AG04449 (cell line): ENCODE measurements at regions of chr6 and their contacts with region 1.

Region 1: DNA sequence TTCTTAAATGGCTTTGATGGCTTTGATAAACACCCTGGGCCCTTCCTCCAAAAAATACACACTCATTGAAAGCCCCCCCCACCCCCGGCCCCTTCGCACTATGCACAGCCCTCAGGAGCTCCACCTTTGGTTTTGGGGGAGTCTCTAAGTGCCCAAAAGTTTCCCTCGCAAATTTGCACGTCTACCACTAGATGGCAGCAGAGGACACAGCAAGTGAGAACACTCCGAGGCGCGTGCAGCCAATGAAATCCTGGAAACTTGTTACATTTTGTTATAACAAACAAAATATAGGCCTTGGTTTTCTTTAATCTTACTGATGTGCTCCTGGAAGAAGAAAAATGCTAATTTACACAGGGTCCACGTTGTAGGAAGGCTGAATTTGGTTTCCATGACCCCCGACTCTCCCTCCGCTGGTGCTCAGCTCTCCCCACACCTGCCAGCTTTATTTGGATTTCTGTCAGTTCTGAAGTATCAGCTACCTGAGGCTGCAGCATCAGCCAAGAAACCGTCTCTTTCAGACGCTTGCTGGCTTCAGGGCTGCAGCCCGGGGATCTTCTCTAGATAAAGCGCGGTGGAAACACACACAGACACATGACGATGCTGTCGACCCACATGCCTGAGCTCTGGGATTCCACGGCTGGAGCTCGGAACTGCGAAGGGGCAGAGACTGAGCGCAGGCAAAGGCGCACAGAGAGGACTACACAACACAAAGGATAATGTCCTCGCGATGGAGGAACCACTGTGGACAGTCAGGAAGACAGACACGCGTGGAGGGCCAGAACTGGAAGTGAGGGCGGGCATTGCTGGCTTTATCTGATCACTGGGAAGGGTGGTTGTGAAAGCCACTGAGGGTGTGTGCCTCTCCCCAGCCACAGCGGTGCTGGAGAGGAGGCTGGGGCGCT is 148.4 kb upstream of the RPS6KA2 start:
- DNase-seq: peak; percentile 9
- H3K4me3 ChIP-seq: no peak overlapping the region
- CTCF ChIP-seq: peak; percentile 81

Region 2: GRCh38 chr6:166739117-166739975 is 36.1 kb before region 1 on chr6:
- CTCF ChIA-PET with region 1: interaction called, 14 read pairs
- POLR2A ChIA-PET with region 1: no interaction called
- DNase-seq: no peak
- H3K4me3 ChIP-seq: no peak overlapping the region
- CTCF ChIP-seq: no peak

Region 3: DNA sequence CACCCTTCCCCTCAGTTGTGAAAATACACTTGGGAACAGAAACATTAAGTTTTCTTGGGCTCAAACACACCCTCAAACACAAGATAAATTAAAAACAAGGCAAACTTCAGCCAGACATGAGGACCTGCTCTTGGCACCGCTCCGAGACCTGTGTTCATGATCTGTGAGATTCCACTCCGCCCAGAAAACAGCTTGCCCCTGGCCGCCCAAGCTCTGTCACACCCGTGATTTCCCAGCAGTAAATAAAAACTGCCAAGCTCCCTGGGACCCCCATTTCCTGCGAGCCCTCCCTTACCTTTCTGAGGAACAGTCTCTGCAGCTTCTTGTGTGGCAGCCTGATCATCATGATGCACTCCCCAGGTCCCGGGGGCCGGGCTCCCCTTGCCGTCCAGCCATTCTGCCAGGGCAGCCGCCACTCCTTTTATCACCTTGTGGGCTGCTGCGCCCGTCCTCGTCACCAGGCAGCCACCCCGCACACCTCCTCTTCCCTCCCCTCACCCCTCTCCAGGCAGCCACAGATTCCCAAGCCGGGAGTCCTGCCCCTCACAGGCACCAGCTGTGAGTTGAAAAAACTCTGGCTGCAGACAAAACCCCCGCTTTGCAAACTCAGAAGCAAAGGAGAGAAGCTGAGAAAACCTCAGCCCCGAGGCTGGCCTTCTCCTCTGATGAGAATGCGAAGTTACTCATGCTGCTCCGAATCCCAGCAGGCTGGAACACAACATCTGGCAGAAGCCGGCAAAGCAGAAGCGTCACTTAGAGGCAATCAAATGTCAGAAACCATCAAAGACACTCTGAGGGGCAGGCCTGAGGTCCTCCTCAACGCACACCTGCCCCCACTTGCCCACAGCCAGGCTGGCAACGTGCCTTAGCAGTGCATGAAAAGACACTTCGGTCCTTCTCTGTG is 17.9 kb before region 1 on chr6:
- CTCF ChIA-PET with region 1: interaction called, 23 read pairs
- POLR2A ChIA-PET with region 1: no interaction called
- DNase-seq: no peak
- H3K4me3 ChIP-seq: no peak overlapping the region; the same call in 1 of the 2 replicates
- CTCF ChIP-seq: no peak

Region 4: DNA sequence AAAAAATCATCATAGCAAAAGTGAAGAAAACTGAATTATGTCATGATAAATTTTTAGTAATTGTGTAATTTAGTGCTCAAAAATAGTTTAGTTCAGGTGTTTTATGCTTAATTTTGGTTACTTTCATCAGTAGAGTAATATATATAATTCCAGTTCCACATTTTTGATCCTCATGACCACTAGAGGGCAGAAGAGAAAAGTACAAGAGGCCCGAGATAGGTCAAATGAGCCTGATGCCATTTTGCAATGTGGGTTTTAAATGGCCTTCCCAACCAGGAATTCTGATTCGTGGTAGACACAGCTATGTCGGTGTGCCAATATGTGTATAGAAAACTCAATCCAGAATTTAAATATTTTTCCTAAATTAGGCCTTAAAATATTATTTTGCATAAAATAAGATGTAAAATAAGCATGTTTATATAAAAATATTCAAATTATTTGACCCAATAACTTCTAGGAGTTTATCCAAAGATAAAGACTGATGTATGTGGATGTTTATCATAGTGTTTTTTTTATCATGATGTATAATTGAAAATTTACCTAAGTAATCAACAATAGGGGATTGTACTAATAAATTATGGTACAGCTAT is 11.4 kb after region 1 on chr6:
- CTCF ChIA-PET with region 1: interaction called, 30 read pairs
- POLR2A ChIA-PET with region 1: no interaction called
- DNase-seq: peak; percentile 14
- H3K4me3 ChIP-seq: no peak overlapping the region
- CTCF ChIP-seq: peak; percentile 39